Esophagus squamous epithelium (tissue), 5 donors: ENCODE measurements at regions of chr6 and their contacts with region 1.

Region 1: GRCh38 chr6:89675949-89676748 is 37.6 kb upstream of the LYRM2 start:
- DNase-seq: no peak
- H3K4me3 ChIP-seq: no peak overlapping the region
- H3K27ac ChIP-seq: no peak overlapping the region
- H3K4me1 ChIP-seq: no peaks in the 10 kb centered on the region
- H3K27me3 ChIP-seq: no peaks in the 10 kb centered on the region
- CTCF ChIP-seq: no peak
- POLR2A ChIP-seq: no peak

Region 2: GRCh38 chr6:89161326-89162046 is 514.7 kb before region 1 on chr6:
- intact Hi-C with region 1: no loop called
- DNase-seq: no peak
- H3K4me3 ChIP-seq: no peak overlapping the region
- H3K27ac ChIP-seq: peak overlapping the region in 3 of 4 donors; percentile 59 to 75 (median 73)
- H3K4me1 ChIP-seq: no peaks in the 10 kb centered on the region
- H3K27me3 ChIP-seq: no peaks in the 10 kb centered on the region
- CTCF ChIP-seq: no peak
- POLR2A ChIP-seq: no peak

Region 3: GRCh38 chr6:89787660-89788328 is 111.6 kb after region 1 on chr6:
- intact Hi-C with region 1: loop called (anchors 10 kb)
- DNase-seq: no peak
- H3K4me3 ChIP-seq: no peak overlapping the region
- H3K27ac ChIP-seq: no peak overlapping the region
- H3K4me1 ChIP-seq: no peaks in the 10 kb centered on the region
- H3K27me3 ChIP-seq: no peaks in the 10 kb centered on the region
- CTCF ChIP-seq: no peak
- POLR2A ChIP-seq: no peak

Region 4: DNA sequence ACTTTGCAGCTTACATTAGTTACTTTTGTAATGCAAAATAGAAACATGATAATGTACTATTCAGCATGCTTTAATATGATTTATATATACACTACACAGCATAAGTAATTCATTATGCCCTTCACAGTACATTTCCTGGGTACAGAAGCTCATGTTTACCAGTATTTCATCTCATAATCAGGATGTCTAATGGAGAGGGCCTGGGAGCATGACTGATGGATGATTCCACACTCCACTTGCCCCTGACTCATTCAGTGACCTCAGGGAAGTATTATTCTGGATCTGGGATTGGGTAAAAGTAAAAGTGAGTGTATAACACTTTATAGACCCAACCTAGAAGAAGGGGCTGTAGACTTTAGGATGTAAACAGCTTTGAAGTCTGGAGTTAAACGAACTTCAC is 651.9 kb after region 1 on chr6:
- intact Hi-C with region 1: no loop called
- DNase-seq: no peak
- H3K4me3 ChIP-seq: no peak overlapping the region
- H3K27ac ChIP-seq: no peak overlapping the region
- H3K4me1 ChIP-seq: no peaks in the 10 kb centered on the region
- H3K27me3 ChIP-seq: no peaks in the 10 kb centered on the region
- CTCF ChIP-seq: no peak
- POLR2A ChIP-seq: no peak